ENCODE measurements at regions of chr11 and their contacts with region 1.

Region 1: DNA sequence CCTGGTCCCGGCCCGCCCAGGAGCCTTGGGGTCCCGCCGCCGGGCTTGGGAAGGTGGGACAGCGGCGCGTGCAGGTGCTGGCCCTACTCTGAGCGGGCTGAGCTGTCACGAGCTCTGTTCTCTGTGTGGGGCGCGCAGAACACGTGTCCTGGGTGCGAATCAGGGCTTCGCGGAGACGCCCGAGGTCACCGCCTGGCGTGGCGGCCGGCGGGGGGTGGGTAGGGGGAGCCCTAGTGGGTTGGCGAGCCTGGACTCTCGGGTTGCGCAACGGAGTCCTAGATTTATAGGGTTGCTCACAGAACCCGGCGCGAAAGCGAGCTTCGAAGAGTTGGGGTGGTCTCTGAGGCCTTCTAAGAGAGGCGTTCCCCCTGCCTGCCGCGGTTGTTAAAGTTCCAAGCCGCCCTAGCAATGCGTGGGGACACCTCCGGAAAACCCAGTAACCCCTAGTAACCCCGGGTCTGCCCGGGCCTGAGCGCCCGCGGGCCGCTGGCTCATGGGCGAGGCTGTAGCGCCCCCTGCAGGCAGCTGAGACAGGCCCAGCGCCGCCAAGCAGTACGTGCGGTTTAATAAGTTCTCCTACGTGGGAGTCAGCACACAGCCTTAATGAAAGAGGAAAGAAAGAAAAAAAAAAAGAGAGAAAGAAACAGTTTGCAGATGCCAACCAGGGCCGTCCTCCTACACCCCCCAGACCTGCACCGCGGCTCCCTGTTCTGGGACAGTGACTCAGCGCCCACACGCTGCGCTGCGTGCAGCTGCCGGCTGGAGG is 2.8 kb downstream of the ADM start:
- DNase-seq: peak; percentile 82
- H3K4me3 ChIP-seq: peak overlapping the region; percentile 95
- H3K27ac ChIP-seq: peak overlapping the region; percentile 62
- H3K27me3 ChIP-seq: no peaks in the 10 kb centered on the region
- CTCF ChIP-seq: peak; percentile 82

Region 2: DNA sequence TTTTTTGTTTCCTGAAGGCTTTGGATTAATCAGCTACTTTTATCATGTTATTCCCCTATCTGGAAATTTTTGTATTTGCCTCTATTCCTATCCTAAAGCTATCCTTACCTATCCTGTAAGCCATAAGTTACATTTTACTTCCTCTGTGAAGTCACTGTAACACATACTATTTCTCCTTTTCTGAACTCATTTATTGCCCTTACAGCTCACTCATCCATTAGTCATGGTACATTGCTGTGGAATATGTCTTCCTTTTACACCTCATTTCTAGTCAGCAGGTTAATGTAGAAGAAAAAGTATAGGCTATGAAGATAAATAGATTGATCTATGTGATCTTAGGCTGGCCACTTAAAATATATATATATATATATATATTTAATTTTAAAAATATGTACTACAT is 615.8 kb before region 1 on chr11:
- in situ Hi-C with region 1: no loop called
- DNase-seq: no peak
- H3K4me3 ChIP-seq: no peak overlapping the region
- H3K27ac ChIP-seq: peak overlapping the region; percentile 9
- H3K27me3 ChIP-seq: no peaks in the 10 kb centered on the region
- CTCF ChIP-seq: no peak

Region 3: DNA sequence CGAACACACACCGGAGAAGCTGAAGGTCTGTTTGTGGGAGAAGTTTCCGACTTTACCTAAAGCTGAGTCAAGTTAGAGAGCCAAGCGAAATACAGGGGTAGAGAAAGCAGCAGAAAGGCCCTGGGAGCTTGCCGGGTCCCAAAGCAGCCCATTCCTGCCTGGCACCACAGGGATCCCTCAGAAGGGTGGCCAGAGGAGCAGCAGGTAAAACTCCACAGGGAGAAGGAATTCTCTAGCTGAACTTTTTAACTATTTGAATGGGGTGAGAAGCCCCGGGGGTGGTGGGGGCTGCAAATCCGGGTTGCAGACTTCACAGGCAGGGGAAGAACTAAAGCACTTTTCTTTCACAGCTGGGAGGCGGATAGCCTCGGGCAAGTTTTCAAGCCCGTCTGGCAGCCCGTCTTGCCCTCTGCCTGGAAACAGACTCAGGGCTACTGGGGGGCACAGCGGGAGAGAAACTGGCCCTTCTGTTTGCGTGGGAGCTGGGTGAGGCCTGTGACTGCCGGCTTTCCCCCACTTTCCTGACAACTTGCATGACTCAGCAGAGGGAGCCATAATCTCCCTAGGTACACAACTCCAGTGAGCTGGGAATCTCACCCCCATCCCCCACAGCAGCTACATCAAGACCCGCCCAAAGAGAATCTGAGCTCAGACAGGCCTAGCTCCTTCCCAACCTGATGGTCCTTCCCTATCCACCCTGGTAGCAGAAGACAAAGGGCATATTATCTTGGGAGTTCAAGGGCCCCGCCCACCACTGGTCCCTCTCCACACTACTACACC is 324.6 kb before region 1 on chr11:
- in situ Hi-C with region 1: loop called (anchors 25 kb)
- DNase-seq: peak; percentile 80
- H3K4me3 ChIP-seq: no peak overlapping the region
- H3K27ac ChIP-seq: peak overlapping the region; percentile 80
- H3K27me3 ChIP-seq: no peaks in the 10 kb centered on the region
- CTCF ChIP-seq: peak; percentile 2

Measured in brain microvascular endothelial cell (primary cell).